Left ventricle myocardium inferior (tissue), 1 donor: ENCODE measurements at regions of chr2 and their contacts with region 1.

Region 1: DNA sequence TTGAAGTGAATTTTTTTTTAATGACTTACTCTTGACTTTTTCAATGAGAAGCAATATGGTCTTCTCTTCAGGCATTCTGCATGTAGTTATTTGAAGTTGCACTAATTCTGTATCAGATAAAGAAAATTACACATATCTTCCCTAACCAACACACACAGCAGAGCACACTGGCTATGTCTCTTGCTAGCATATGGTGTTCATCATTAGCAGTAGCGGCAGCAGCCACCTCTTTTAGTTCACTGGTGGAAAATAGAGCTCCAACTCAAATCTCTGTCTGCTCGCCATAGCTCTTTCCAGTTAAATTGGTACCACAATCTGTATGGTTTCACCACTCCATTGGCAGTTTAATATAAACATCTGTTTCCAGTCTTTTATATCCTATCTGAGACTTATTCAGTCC is 278.1 kb upstream of the ZEB2 start:
- DNase-seq: no peak
- H3K4me3 ChIP-seq: no peak overlapping the region
- H3K27ac ChIP-seq: no peak overlapping the region
- H3K4me1 ChIP-seq: no peaks in the 10 kb centered on the region
- H3K27me3 ChIP-seq: no peaks in the 10 kb centered on the region
- CTCF ChIP-seq: no peak

Region 2: GRCh38 chr2:144747571-144747970 is 50.5 kb before region 1 on chr2:
- intact Hi-C with region 1: no loop called
- DNase-seq: no peak
- H3K4me3 ChIP-seq: no peak overlapping the region
- H3K27ac ChIP-seq: no peak overlapping the region
- H3K4me1 ChIP-seq: no peaks in the 10 kb centered on the region
- H3K27me3 ChIP-seq: no peaks in the 10 kb centered on the region
- CTCF ChIP-seq: no peak

Region 3: DNA sequence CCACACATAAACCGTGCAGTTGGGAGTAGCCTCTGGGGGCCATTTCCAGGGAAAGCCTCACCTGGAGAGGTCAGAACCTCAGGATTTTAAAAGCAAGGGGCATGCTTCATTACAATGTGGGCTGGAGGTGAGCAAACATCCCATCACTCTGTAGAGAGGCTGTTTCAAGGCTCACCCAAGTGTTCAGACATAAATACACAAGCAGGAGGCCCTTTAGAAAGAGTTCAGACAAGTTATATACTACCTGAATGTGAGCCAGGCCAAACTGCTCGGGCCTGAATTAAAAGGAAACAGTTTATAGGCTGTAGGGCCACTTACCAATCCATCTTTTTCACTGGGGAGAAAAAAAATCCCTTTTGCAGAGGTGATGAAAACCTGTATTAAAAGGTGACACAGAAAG is 261.9 kb after region 1 on chr2:
- intact Hi-C with region 1: loop called (anchors 10 kb)
- DNase-seq: no peak
- H3K4me3 ChIP-seq: no peak overlapping the region
- H3K27ac ChIP-seq: no peak overlapping the region
- H3K4me1 ChIP-seq: no peaks in the 10 kb centered on the region
- H3K27me3 ChIP-seq: no peaks in the 10 kb centered on the region
- CTCF ChIP-seq: no peak